Activated CD4-positive, alpha-beta memory T cell treated with anti-CD3 and anti-CD28 coated beads, Interleukin-2, amount 10 ng/mL, durations not matched to agents 7 days and 5 days (primary cell): ENCODE measurements at regions of chr7 and their contacts with region 1.

Region 1: DNA sequence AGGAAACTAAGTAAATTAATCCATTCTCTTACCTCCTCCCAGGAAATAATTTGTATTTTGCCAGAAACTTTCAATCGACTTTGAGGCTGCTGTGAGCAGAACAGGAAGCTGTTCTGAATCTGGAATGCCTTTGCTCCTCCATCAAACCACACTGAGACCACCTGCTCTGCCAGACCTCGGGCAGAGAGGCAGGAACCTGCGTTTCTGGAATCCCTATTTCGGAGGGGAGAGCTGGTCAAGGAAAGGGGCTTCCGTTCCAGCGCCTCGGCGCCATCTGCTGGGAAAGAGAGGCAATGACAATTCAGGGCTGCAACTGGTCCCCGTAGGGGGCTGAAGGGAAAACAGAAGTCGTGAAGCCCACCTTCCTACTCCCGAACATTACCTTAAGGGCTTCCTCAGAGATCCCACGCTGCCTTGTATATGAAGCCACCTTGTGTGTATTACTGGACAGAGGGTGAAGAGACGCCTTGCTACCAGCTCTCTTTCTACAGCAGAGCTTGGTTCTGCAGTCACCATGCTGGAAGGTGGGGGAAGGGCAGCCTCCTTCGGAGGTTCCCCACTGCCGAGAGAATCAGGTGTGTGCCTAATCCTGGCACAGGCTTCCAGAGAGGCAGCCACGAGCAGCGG is 31.2 kb downstream of the ZNF467 start:
- DNase-seq: peak; percentile 58
- H3K4me3 Mint-ChIP-seq: peak overlapping the region; percentile 24
- H3K27ac Mint-ChIP-seq: no peak overlapping the region
- H3K4me1 Mint-ChIP-seq: peaks cover 11% of the 10 kb centered on the region
- H3K27me3 Mint-ChIP-seq: peaks cover 37% of the 10 kb centered on the region

Region 2: GRCh38 chr7:149670288-149670687 is 71.9 kb before region 1 on chr7:
- CTCF ChIA-PET with region 1: interaction called, 16 read pairs
- POLR2A ChIA-PET with region 1: no interaction called
- DNase-seq: no peak
- H3K4me3 Mint-ChIP-seq: no peak overlapping the region
- H3K27ac Mint-ChIP-seq: no peak overlapping the region
- H3K4me1 Mint-ChIP-seq: peaks cover 2% of the 10 kb centered on the region
- H3K27me3 Mint-ChIP-seq: peaks cover 50% of the 10 kb centered on the region